ENCODE measurements at regions of chrX and their contacts with region 1.

Region 1: DNA sequence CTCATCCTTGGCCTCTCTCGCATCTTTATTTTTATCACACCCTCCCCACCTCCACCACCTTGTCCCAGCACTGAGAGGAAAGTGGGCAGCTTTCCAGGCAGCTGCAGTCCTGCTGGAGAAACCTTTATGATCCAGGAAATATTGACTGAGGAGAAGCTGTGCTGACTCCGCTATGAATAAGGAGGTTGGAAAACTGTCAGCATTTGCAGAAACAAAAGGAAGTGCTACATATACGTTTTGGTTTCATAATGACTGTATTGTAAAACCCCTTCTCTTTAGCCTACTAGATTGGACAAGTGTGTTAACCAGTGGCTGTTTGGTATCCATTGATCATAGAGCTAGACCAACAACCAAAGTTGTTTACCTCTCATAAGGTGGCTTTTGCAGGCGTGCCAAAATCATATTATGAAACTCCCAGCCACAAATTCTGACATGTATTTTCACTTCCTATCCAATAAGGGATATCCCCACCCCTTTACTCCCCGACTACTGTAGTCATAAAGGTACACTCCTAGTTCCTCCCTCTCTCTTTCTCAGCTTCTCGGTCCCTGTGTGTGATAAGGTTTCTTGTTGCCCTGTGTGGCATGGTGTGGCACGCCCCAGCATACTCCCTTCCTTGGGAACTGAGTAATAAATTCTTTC is 88.4 kb downstream of the GPR143 start:
- DNase-seq: peak; percentile 82
- ATAC-seq: peak; percentile 91
- H3K4me3 ChIP-seq: no peak overlapping the region
- H3K4me3 Mint-ChIP-seq: peak overlapping the region; percentile 77
- H3K27ac ChIP-seq: peak overlapping the region; percentile 69 to 81
- H3K27ac Mint-ChIP-seq: peak overlapping the region; percentile 92
- H3K4me1 ChIP-seq: peaks cover 24 to 38% of the 10 kb centered on the region in 2 donors
- H3K4me1 Mint-ChIP-seq: peaks cover 44% of the 10 kb centered on the region
- H3K27me3 ChIP-seq: no peaks in the 10 kb centered on the region
- H3K27me3 Mint-ChIP-seq: no peaks in the 10 kb centered on the region
- CTCF ChIP-seq: no peak

Region 2: DNA sequence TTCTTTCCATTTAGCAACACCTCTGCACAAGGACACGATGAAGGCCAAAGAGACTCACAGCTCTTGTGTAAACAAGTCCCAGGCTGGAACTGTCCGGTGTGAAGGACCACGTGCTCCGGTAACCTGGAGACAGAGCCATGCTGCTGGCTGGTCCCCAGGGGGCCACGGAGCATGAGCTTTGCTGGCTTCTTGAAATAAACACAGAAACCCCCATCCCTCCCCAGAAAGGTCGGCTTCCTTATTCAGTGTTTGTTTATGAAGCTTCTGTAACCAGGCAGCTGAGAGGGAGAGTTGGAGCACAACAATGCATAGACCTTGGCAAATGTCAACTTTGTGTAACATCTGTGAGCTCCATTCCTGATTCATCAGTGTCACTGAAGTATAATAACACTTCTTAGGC is 20.9 kb before region 1 on chrX:
- CTCF ChIA-PET with region 1: no interaction called
- POLR2A ChIA-PET with region 1: interaction called, 8 read pairs
- intact Hi-C with region 1: loop called (anchors 1 kb)
- DNase-seq: peak; percentile 62
- ATAC-seq: peak; percentile 82
- H3K4me3 ChIP-seq: no peak overlapping the region
- H3K4me3 Mint-ChIP-seq: peak overlapping the region; percentile 54
- H3K27ac ChIP-seq: peak overlapping the region; percentile 41 to 64
- H3K27ac Mint-ChIP-seq: peak overlapping the region; percentile 91
- H3K4me1 ChIP-seq: peaks cover 0 to 19% of the 10 kb centered on the region in 2 donors
- H3K4me1 Mint-ChIP-seq: peaks cover 23% of the 10 kb centered on the region
- H3K27me3 ChIP-seq: no peaks in the 10 kb centered on the region
- H3K27me3 Mint-ChIP-seq: no peaks in the 10 kb centered on the region
- CTCF ChIP-seq: no peak

Region 3: DNA sequence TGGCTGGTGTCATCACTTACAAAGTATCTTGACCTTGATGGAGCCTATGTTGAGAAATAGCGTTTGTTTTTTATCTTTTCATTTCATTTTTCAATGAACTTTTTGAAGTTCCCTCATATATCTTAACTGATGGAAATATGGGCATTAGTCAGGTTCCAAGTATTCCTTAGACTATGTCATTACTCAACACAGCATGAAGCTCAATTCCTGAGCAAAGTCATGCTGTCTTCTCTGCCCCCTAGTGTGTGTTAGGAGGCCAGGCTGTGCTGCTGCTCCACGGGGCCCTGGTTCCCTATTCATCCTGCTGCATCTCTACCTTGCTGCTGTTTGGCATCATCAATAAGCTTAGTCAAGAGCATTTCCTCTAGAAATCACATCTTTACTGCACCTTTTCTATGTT is 47.5 kb after region 1 on chrX:
- CTCF ChIA-PET with region 1: no interaction called
- POLR2A ChIA-PET with region 1: no interaction called
- intact Hi-C with region 1: no loop called
- DNase-seq: no peak
- ATAC-seq: no peak
- H3K4me3 ChIP-seq: no peak overlapping the region
- H3K4me3 Mint-ChIP-seq: no peak overlapping the region
- H3K27ac ChIP-seq: no peak overlapping the region
- H3K27ac Mint-ChIP-seq: no peak overlapping the region
- H3K4me1 ChIP-seq: no peaks in the 10 kb centered on the region
- H3K4me1 Mint-ChIP-seq: no peaks in the 10 kb centered on the region
- H3K27me3 ChIP-seq: no peaks in the 10 kb centered on the region
- H3K27me3 Mint-ChIP-seq: no peaks in the 10 kb centered on the region
- CTCF ChIP-seq: no peak

Region 4: DNA sequence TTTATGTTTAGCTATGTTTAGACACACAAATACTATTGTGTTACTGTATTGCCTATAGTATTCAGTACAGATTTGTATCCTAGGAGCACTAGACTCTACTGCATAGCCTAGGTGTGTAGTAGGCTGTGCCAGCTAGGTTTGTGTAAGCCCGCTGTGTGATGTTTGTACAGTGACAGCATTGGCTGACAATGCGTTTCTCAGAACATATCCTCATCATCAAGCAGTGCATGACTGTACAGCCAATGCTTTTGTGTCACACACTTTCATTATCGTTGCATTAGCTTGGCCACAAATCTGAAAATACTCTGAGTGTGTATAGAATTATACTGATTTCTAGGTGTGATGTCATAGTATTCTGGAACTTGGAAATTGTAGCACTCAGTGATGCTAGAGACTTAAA is 353.4 kb after region 1 on chrX:
- CTCF ChIA-PET with region 1: no interaction called
- POLR2A ChIA-PET with region 1: no interaction called
- intact Hi-C with region 1: no loop called
- DNase-seq: no peak
- ATAC-seq: no peak
- H3K4me3 ChIP-seq: no peak overlapping the region
- H3K4me3 Mint-ChIP-seq: no peak overlapping the region
- H3K27ac ChIP-seq: no peak overlapping the region
- H3K27ac Mint-ChIP-seq: no peak overlapping the region
- H3K4me1 ChIP-seq: peaks cover 11 to 15% of the 10 kb centered on the region in 2 donors
- H3K4me1 Mint-ChIP-seq: peaks cover 46% of the 10 kb centered on the region
- H3K27me3 ChIP-seq: no peaks in the 10 kb centered on the region
- H3K27me3 Mint-ChIP-seq: no peaks in the 10 kb centered on the region
- CTCF ChIP-seq: no peak

Measured in B cell (primary cell).